Posterior vena cava (tissue), 2 donors: ENCODE measurements at regions of chr9 and their contacts with region 1.

Region 1: GRCh38 chr9:98998441-98999151 is 54.9 kb downstream of the COL15A1 start:
- DNase-seq: peak; percentile 94

Region 2: DNA sequence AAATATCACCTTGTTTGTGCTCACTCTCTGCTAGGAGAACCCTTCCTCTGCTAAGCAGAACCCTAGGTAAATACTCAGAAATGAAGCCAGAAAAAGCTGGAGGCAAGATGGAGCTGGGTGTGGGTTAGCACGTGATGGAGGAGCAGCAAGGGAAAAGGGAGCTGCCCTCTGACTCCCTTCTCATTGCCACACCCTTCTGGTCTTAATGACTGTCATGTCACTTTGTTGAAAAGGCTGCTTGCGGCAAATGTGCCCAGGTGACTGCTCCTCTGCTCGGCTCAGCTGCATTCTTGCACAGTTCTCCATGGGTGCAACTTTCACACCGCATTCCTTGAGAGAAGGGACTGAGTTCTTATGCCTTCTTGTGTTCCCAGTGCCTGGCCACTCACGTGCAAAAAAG is 706.8 kb before region 1 on chr9:
- intact Hi-C with region 1: no loop called
- DNase-seq: no peak

Region 3: GRCh38 chr9:98726735-98727134 is 271.9 kb before region 1 on chr9:
- intact Hi-C with region 1: no loop called
- DNase-seq: no peak

Region 4: DNA sequence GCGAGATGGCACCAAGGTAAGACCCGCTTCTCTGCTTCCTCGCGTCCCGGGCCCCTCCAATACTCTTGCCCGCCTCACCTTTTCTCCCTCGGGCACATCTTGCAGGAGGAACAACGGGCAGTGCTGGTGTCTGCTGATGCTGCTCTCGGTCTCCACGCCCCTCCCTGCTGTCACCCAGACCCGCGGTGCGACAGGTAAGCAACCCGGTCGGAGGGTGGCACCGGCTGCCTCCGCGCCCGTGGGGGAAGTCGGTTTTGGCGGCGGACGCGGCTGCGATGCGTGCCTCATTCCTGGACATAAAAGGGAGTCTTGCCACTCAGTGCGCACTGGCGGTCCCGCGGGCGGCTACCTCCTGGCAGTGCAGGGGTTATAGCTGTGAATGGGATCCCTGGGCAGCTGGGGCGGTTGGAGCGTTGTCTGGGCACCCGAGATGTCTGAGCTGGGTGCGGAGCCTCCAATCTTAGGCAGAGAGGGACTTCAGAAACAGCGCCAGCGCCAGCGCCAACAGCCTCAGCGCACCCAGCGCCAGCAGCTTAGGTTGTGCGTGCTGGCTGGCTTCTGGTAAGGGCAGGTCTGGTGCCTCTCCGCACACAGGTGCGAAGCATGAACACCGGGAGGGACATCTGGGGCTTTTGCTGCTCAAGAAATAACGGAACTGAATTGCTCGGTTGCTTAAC is 54.4 kb before region 1 on chr9:
- intact Hi-C with region 1: loop called in 1 of 2 experiments (anchors 5 kb)
- DNase-seq: peak; percentile 86

Region 5: GRCh38 chr9:98957826-98958225 is 40.8 kb before region 1 on chr9:
- intact Hi-C with region 1: no loop called
- DNase-seq: no peak

Region 6: DNA sequence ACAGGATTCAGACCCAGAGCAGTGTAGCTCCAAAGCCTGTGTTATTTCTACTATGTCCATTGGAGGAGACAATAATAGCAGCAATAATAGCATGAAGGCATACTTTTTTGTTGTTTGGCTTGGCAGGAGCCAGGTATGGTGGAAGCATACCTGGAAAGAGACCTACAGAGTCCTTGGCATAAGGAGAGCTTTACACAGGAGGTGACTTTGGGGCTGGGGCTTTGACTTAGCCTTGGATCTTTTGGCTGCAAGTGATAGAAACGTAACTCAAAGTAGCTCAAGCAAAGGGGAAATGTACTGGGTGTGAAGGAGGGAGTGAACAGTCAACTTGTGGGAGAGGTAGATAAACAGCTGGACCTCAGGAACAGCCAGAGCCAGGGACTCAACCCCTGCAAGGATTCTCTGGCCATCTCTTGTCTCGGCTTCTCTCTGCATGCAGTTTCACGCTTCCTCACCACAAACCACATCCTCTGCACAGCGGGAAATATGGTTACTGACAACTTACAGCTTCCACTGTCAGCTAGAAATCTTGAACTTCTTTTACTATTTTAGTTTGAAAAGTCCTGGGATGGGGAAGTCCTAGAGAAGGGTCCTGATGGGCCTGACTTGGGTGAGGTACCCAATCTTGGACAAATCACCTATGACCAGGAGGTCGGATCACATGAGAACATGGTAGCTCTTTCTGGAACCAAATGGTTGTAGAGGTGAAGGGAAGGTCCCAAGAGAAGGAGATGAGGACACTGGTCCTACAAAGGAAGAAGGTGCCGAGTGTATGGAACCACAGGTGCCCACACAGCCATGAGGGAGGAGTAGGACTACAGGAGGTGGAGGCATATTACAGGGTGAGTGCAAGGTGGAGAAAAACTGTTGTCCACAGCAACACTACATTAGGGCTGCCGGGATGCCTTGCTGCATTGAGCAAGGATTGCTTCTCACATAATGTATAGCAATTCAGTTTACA is 59.3 kb after region 1 on chr9:
- intact Hi-C with region 1: no loop called
- DNase-seq: no peak